AG04449 (cell line): ENCODE measurements at regions of chr2 and their contacts with region 1.

Region 1: DNA sequence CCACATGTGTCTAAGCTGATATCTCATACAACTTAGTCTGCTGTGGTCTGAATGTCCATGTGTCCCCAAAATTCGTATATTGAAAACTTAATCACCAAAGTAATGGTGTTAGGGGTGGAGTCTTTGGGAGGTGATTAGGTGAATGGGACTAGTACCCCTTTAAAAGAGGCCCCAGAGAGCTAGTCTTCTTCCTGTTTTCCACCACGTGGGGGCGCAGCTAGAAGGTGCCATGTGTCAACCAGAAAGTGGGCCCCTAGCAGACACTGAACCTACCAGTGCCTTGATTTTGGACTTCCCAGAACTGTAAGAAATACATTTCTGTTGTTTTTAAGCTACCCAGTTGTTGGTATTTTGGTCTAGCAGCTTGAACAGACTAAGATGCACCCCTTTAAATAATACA is 86.6 kb downstream of the ASB1 start:
- DNase-seq: no peak
- H3K4me3 ChIP-seq: no peak overlapping the region
- CTCF ChIP-seq: peak; percentile 54

Region 2: GRCh38 chr2:238493880-238494572 is 19.3 kb before region 1 on chr2:
- CTCF ChIA-PET with region 1: interaction called, 19 read pairs
- POLR2A ChIA-PET with region 1: no interaction called
- DNase-seq: no peak
- H3K4me3 ChIP-seq: no peak overlapping the region
- CTCF ChIP-seq: no peak

Region 3: DNA sequence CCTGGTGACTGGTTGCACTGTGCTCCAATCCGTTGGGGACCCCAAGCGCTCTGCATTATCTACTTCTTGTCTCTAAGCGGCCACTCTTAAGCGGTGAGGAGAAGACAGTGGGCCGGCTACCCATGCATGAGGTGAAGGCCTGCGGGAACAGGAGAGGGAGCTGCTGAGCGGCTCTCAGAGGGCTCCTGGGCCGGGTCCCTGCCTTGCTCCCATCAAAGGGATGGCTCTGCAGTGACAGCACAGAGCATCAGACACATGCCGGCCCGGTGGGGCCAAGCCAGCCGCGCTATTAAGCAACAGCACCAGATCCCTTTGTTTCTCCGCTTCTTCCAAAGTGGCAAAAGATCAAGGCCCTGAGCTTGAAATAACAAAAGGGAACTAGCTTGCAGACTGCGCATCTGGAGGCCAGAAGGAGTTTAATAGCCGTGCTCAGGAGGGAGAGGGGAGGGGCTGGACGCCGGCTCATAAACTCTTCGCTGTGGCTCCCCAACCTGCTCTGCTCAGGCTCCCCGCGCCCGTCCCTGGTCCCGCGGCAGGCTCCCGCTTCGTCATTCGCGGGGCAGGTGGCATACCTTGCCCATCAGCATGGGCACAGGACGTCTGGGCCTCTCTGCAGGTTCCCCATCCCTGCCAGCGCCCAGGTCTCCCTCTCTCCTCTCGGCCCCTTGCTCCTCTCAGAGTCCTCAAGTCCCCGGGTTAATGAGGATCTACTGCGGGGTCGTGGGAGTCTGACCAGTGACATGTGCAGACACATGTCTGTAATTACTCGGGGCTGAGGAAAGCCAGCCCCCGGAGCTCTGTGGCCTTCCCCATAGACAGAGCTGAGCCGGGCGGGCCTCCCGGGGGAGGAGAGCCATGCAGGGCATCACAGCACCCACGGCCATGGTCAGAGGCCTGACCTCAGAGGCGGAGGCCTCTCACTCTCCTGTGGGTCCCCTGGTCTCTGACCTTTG is 10.1 kb after region 1 on chr2:
- CTCF ChIA-PET with region 1: interaction called, 33 read pairs
- POLR2A ChIA-PET with region 1: no interaction called
- DNase-seq: no peak
- H3K4me3 ChIP-seq: no peak overlapping the region
- CTCF ChIP-seq: peak; percentile 66

Region 4: GRCh38 chr2:238528953-238529781 is 15.8 kb after region 1 on chr2:
- CTCF ChIA-PET with region 1: interaction called, 33 read pairs
- POLR2A ChIA-PET with region 1: no interaction called
- DNase-seq: peak; percentile 55
- H3K4me3 ChIP-seq: no peak overlapping the region
- CTCF ChIP-seq: no peak

Region 5: DNA sequence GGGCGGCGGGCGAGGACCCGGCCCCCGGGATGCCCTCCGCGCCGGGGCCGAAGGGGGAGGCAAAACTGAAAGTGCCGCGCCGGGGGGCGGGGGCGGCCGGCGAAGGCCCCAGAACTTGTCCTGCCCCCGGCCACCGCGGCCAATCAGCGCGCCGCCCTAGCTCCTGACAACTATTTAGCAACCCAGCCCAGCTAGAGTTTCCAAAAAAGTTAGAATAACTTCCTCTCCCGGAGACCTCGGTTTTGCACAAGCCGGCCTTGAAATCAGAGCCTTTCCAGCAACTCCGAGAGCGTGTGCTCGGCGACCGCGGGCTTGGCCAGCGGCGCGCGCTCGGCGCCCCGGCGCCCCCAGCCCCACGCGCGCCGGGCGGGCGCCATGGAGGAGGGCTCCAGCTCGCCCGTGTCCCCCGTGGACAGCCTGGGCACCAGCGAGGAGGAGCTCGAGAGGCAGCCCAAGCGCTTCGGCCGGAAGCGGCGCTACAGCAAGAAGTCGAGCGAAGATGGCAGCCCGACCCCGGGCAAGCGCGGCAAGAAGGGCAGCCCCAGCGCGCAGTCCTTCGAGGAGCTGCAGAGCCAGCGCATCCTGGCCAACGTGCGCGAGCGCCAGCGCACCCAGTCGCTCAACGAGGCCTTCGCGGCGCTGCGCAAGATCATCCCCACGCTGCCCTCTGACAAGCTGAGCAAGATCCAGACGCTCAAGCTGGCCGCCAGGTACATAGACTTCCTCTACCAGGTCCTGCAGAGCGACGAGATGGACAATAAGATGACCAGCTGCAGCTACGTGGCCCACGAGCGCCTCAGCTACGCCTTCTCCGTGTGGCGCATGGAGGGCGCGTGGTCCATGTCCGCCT is 334.7 kb after region 1 on chr2 and contains the start of gene TWIST2:
- CTCF ChIA-PET with region 1: interaction called, 6 read pairs
- POLR2A ChIA-PET with region 1: interaction called, 13 read pairs
- DNase-seq: peak; percentile 85
- H3K4me3 ChIP-seq: peak within 1 kb of the TSS; percentile 89
- CTCF ChIP-seq: peak; percentile 26

Region 6: GRCh38 chr2:239106314-239106908 is 593.1 kb after region 1 on chr2:
- CTCF ChIA-PET with region 1: interaction called, 11 read pairs
- POLR2A ChIA-PET with region 1: no interaction called
- DNase-seq: peak; percentile 7
- H3K4me3 ChIP-seq: no peak overlapping the region
- CTCF ChIP-seq: peak; percentile 89